Activated B cell treated with CpG ODN at 0.5 μM for 24 hours (primary cell): ENCODE measurements at regions of chr1 and their contacts with region 1.

Region 1: GRCh38 chr1:84573967-84574842 is at the start of gene CTBS:
- DNase-seq: peak; percentile 81
- ATAC-seq: peak; percentile 91
- H3K4me3 Mint-ChIP-seq: peak within 1 kb of the TSS; percentile 96
- H3K27ac Mint-ChIP-seq: peak within 1 kb of the TSS; percentile 99
- H3K4me1 Mint-ChIP-seq: peaks cover 40% of the 10 kb centered on the region
- H3K27me3 Mint-ChIP-seq: no peaks in the 10 kb centered on the region
- CTCF ChIP-seq: no peak
- total RNA-seq, gene CTBS: 11.8 and 13.2 TPM in 2 replicates

Region 2: GRCh38 chr1:84478876-84479868 is 95.0 kb before region 1 on chr1 and contains the start of gene RPF1:
- CTCF ChIA-PET with region 1: interaction called, 7 read pairs
- POLR2A ChIA-PET with region 1: interaction called, 24 read pairs
- intact Hi-C with region 1: loop called (anchors 1 kb)
- DNase-seq: peak; percentile 64
- ATAC-seq: peak; percentile 96
- H3K4me3 Mint-ChIP-seq: peak within 1 kb of the TSS; percentile 97
- H3K27ac Mint-ChIP-seq: peak within 1 kb of the TSS; percentile 97
- H3K4me1 Mint-ChIP-seq: peaks cover 37% of the 10 kb centered on the region
- H3K27me3 Mint-ChIP-seq: peaks cover 21% of the 10 kb centered on the region
- CTCF ChIP-seq: no peak
- total RNA-seq, gene RPF1: 42.8 and 46.3 TPM in 2 replicates

Region 3: DNA sequence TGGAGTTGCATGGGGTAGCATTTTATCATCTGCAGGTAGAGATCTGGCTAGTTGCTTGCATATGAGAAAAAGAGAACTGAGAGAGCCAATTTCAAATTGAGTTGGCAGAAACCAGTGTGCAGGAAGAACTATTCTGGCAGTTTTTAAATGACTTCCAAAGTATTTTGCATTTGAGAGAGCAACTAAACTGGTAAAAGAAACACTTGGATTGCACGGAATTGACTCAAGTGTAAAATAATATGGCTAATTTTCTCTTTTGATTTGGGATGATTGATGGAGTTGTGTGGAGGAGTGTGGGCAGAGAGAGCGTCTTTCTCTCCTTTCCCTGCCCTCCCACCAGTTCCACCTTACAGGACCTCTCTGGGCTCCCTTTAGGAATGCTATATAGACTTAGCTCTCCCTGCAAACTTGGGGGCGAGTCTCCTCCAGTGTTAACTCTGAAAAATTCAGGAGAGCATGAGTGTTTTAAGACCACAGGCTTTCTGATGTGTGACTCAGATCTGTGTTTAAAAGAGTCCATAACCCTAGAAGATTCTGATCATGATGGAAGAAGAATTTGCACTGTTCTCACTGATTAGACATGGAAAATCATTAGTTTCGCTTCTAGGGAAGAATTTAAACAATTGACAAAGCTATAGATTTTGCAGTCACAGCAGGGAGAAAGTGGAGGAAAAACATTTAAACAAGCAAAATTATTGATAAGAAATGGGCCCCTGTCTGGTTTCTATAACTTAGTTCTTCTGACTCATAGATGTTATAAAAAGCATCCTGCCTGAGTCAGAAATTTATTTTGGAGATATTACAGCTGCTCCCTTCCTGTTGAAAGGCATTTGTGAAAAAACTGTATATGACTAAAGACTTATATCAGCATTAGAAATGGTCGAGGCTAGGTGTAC is 24.9 kb after region 1 on chr1:
- CTCF ChIA-PET with region 1: no interaction called
- POLR2A ChIA-PET with region 1: interaction called, 44 read pairs
- intact Hi-C with region 1: loop called (anchors 2 kb)
- DNase-seq: no peak
- ATAC-seq: peak; percentile 63
- H3K4me3 Mint-ChIP-seq: peak overlapping the region; percentile 53
- H3K27ac Mint-ChIP-seq: peak overlapping the region; percentile 88
- H3K4me1 Mint-ChIP-seq: peaks cover 17% of the 10 kb centered on the region
- H3K27me3 Mint-ChIP-seq: no peaks in the 10 kb centered on the region
- CTCF ChIP-seq: no peak